AG04450 (cell line): ENCODE measurements at regions of chr5 and their contacts with region 1.

Region 1: DNA sequence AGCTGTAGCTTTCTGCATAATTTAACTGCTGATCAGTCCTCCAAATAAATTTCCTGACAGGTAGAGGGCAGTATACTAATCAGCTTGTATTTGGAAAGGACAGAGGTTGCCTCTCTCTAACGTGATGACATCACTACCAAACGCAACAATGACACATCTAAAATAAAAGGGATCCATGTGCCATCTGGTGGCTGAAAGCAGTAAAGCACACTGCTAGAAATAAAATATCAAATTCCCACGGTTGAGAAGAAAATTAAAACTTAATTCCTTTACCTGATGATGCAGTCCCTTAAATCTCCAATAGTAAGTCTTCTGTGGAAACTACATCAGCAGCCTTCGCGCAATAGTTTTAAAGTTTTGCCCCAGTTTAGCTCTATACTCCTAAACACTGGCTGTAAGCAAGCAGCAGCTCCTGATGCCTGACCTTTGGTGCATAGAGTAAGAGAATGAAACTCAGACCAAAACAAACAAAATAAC is 54.5 kb downstream of the DIAPH1 start:
- DNase-seq: peak; percentile 90
- H3K4me3 ChIP-seq: no peak overlapping the region
- H3K27ac ChIP-seq: peak overlapping the region; percentile 23
- H3K27me3 ChIP-seq: no peaks in the 10 kb centered on the region
- CTCF ChIP-seq: peak; percentile 78

Region 2: DNA sequence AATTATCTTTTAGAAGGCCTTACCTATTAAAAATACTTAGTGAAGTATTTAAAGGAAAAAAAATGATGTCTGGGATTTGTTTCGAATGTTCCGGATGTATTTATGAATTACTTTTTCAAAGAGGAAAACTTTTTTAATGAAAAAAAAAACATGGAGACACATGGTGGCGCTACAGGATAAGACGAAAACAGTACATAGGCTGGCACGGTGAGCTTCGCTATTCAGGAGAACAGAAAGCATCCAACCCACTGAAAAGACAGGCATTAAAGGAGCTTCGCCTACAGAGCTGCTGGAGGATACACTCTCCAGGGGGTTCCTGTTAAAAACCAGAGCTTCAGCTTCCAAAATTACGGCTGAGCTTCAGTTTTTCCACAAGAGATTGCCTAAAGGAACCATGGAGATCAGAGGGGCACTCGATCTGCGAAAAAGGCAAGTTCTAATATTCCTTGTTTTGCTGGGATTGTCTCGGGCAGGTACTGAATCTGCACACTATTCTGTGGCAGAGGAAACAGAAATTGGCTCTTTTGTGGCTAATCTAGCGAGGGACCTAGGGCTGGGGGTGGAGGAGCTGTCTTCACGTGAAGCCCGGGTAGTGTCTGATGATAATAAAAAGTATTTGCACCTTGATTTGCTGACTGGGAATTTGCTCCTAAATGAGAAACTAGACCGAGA is 341.0 kb before region 1 on chr5 and contains the start of gene PCDHB14:
- CTCF ChIA-PET with region 1: interaction called, 66 read pairs
- POLR2A ChIA-PET with region 1: no interaction called
- DNase-seq: no peak
- H3K4me3 ChIP-seq: peak within 1 kb of the TSS; percentile 33
- H3K27ac ChIP-seq: no peak within 1 kb of the TSS
- H3K27me3 ChIP-seq: no peaks in the 10 kb centered on the region
- CTCF ChIP-seq: no peak
- polyA plus RNA-seq, gene PCDHB14: 0.98 and 1.1 TPM in 2 replicates

Region 3: DNA sequence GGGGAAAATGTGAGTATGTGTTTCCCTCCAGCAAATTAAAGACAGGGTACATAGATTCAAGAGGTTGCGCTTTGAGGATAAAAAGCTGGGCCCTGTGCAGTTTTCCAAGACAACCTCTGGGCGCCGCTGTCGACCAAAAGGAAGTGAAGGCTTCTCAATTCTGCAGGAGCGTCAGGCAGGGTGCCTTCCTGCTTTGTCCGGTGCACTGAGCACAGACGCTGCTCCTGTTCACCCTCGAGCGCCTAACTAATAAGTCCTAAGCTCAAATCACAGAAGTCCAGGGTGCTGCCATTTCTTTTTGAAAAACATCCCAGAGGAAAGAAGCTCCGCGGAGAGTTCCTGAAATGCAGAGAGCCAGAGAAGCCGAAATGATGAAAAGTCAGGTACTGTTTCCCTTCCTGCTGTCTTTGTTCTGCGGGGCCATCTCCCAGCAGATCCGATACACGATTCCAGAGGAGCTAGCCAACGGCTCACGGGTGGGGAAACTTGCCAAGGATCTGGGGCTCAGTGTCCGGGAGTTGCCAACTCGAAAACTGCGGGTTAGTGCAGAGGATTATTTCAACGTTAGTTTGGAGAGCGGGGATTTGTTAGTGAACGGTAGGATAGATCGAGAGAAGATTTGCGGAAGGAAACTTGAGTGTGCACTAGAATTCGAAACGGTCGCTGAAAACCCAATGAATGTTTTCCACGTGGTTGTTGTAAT is 214.2 kb before region 1 on chr5 and contains the start of gene PCDHGB1:
- CTCF ChIA-PET with region 1: interaction called, 46 read pairs
- POLR2A ChIA-PET with region 1: interaction called, 3 read pairs
- DNase-seq: no peak
- H3K4me3 ChIP-seq: peak within 1 kb of the TSS; percentile 46
- H3K27ac ChIP-seq: no peak within 1 kb of the TSS
- H3K27me3 ChIP-seq: peaks cover 2% of the 10 kb centered on the region
- CTCF ChIP-seq: peak; percentile 54
- polyA plus RNA-seq, gene PCDHGB1: 3.2 TPM in 2 replicates

Region 4: GRCh38 chr5:141402553-141403260 is 161.5 kb before region 1 on chr5 and contains the start of gene PCDHGA9:
- CTCF ChIA-PET with region 1: interaction called, 54 read pairs
- POLR2A ChIA-PET with region 1: interaction called, 4 read pairs
- DNase-seq: no peak
- H3K4me3 ChIP-seq: peak within 1 kb of the TSS; percentile 45
- H3K27ac ChIP-seq: peak within 1 kb of the TSS; percentile 47
- H3K27me3 ChIP-seq: no peaks in the 10 kb centered on the region
- CTCF ChIP-seq: peak; percentile 53
- polyA plus RNA-seq, gene PCDHGA9: 6.4 and 8.0 TPM in 2 replicates

Region 5: GRCh38 chr5:141465351-141465750 is 98.9 kb before region 1 on chr5:
- CTCF ChIA-PET with region 1: interaction called, 13 read pairs
- POLR2A ChIA-PET with region 1: no interaction called
- DNase-seq: no peak
- H3K4me3 ChIP-seq: no peak overlapping the region
- H3K27ac ChIP-seq: no peak overlapping the region
- H3K27me3 ChIP-seq: no peaks in the 10 kb centered on the region
- CTCF ChIP-seq: no peak

Region 6: GRCh38 chr5:141598391-141599350 is 34.4 kb after region 1 on chr5:
- CTCF ChIA-PET with region 1: interaction called, 23 read pairs
- POLR2A ChIA-PET with region 1: no interaction called
- DNase-seq: no peak
- H3K4me3 ChIP-seq: no peak overlapping the region
- H3K27ac ChIP-seq: no peak overlapping the region
- H3K27me3 ChIP-seq: no peaks in the 10 kb centered on the region
- CTCF ChIP-seq: no peak

Region 7: GRCh38 chr5:141677415-141677814 is 113.2 kb after region 1 on chr5:
- CTCF ChIA-PET with region 1: no interaction called
- POLR2A ChIA-PET with region 1: no interaction called
- DNase-seq: no peak
- H3K4me3 ChIP-seq: no peak overlapping the region
- H3K27ac ChIP-seq: no peak overlapping the region
- H3K27me3 ChIP-seq: no peaks in the 10 kb centered on the region
- CTCF ChIP-seq: peak; percentile 29

Region 8: GRCh38 chr5:141701360-141702119 is 137.3 kb after region 1 on chr5:
- CTCF ChIA-PET with region 1: no interaction called
- POLR2A ChIA-PET with region 1: no interaction called
- DNase-seq: no peak
- H3K4me3 ChIP-seq: no peak overlapping the region
- H3K27ac ChIP-seq: no peak overlapping the region
- H3K27me3 ChIP-seq: peaks cover 91% of the 10 kb centered on the region
- CTCF ChIP-seq: no peak

Region 9: DNA sequence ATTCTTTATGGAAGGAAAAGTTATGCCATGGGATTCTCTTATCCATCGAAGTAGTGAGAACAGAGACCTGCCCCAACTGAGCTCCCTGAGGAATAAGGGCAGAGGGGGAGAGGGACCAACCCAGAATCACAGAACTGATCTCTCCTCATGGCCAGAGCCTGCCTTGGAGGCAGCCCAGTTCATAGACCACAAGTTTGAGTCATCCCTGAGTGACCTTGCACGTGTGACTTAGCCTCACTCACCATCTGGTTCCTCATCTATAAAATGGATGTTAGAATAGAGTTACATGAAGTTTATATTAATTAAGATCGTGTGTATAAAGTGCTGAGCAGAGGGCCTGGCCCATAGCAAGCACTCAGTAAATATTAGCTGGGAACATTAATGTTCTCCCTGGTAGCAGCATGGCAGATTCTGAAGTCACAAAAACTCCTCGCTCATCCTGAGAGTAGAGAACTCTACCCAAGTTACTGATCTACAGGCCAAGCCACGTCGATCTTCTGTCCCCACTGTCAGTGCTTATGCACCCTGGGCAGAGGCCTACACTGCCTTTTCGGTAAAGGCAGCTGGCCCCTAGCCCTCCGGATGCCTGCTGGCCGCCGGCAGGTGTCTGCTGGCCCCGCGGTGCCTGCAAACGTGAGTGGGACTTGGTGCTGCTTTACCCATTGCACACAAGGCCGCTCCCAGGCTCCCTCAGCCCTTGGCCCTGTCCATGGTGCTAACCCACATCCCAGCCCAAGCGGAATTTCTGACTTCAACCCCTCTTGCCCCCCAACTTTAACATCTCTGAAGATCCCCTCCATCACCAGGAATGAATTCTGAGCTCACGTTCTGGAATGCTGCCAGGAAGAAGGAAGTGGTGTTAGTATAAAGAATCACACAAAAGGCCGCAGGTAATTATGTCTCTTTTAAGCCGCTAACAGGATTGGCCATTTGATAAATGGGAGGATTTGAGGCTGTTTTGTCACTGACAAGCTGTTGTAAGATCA is 178.9 kb after region 1 on chr5:
- CTCF ChIA-PET with region 1: no interaction called
- POLR2A ChIA-PET with region 1: no interaction called
- DNase-seq: no peak
- H3K4me3 ChIP-seq: no peak overlapping the region
- H3K27ac ChIP-seq: no peak overlapping the region
- H3K27me3 ChIP-seq: peaks cover 7% of the 10 kb centered on the region
- CTCF ChIP-seq: no peak